PC-3 (cell line): ENCODE measurements at regions of chr5 and their contacts with region 1.

Region 1: GRCh38 chr5:165232509-165233028 is 1727.2 kb downstream of the MAT2B start:
- DNase-seq: no peak
- ATAC-seq: no peak
- H3K4me3 ChIP-seq: no peak overlapping the region
- H3K27ac ChIP-seq: peak overlapping the region; percentile 11; the same call in 1 of the 2 replicates
- H3K4me1 ChIP-seq: no peaks in the 10 kb centered on the region
- H3K27me3 ChIP-seq: no peaks in the 10 kb centered on the region
- CTCF ChIP-seq: no peak

Region 2: DNA sequence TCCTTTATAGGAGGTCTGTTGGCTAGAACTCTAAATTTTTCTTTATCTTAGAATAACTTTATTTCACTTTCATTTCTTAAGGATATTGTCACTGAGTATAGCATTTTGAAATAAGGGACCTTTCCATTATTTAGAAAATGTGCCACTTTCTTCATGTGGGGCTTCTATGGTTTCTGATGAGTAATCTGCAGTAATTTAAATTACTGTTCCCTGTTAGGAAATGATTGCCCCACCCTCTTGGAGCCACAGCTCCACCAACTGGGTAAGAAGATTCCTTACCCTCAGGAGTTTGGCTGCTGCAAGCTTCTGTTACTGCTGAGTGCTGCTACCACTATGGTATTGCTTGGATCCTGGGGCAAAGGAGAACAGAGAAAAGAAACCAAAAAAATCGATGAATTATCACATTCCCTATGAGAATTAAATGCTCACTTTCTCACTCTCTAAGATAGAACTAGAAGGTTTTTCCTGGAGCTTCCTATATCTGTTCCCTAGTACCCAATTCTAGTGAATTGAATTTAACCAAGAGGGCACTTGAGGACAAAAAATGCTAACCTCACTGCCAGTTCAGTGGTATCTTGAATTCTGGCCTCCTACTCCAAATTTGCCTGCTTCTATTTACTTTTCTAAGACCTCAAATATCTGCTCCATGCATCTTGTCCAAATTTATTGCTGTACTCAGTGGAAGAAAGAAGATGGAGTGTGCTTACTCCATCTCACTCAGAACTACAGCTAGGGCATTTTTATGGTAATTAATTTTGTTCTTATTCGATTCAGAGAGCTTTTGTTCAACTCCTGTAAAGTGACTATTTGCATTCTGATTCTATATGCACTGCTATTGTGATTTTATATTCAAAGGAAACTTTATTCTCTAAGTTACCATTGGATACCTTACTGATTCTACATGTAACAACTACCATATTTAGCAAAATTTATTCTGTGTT is 384.2 kb after region 1 on chr5:
- CTCF ChIA-PET with region 1: no interaction called
- POLR2A ChIA-PET with region 1: no interaction called
- intact Hi-C with region 1: loop called (anchors 5 kb)
- DNase-seq: peak; percentile 4
- ATAC-seq: no peak
- H3K4me3 ChIP-seq: no peak overlapping the region
- H3K27ac ChIP-seq: no peak overlapping the region
- H3K4me1 ChIP-seq: no peaks in the 10 kb centered on the region
- H3K27me3 ChIP-seq: no peaks in the 10 kb centered on the region
- CTCF ChIP-seq: no peak